ENCODE measurements at regions of chr10 and their contacts with region 1.

Region 1: GRCh38 chr10:92452313-92452712 is 121.6 kb downstream of the IDE start:
- DNase-seq: no peak
- ATAC-seq: no peak
- H3K4me3 Mint-ChIP-seq: no peak overlapping the region
- H3K27ac Mint-ChIP-seq: no peak overlapping the region
- H3K4me1 Mint-ChIP-seq: no peaks in the 10 kb centered on the region
- H3K27me3 Mint-ChIP-seq: no peaks in the 10 kb centered on the region
- CTCF ChIP-seq: no peak

Region 2: GRCh38 chr10:92381543-92381954 is 70.8 kb before region 1 on chr10:
- CTCF ChIA-PET with region 1: no interaction called
- POLR2A ChIA-PET with region 1: interaction called, 13 read pairs
- DNase-seq: no peak
- ATAC-seq: no peak
- H3K4me3 Mint-ChIP-seq: no peak overlapping the region
- H3K27ac Mint-ChIP-seq: no peak overlapping the region
- H3K4me1 Mint-ChIP-seq: peaks cover 35% of the 10 kb centered on the region
- H3K27me3 Mint-ChIP-seq: no peaks in the 10 kb centered on the region
- CTCF ChIP-seq: no peak

Measured in WTC11 (cell line).